GM12878 (cell line): ENCODE measurements at regions of chr7 and their contacts with region 1.

Region 1: GRCh38 chr7:87416682-87417587 is 58.5 kb downstream of the ABCB4 start:
- DNase-seq: peak; percentile 44
- ATAC-seq: peak; percentile 96
- H3K4me3 ChIP-seq: no peak overlapping the region
- H3K27ac ChIP-seq: no peak overlapping the region
- H3K4me1 ChIP-seq: no peaks in the 10 kb centered on the region
- H3K27me3 ChIP-seq: no peaks in the 10 kb centered on the region
- CTCF ChIP-seq: peak; percentile 55 to 82 (median 61)
- EP300 ChIP-seq: no peak
- POLR2A ChIP-seq: no peak
- RAD21 ChIP-seq: peak; percentile 90

Region 2: DNA sequence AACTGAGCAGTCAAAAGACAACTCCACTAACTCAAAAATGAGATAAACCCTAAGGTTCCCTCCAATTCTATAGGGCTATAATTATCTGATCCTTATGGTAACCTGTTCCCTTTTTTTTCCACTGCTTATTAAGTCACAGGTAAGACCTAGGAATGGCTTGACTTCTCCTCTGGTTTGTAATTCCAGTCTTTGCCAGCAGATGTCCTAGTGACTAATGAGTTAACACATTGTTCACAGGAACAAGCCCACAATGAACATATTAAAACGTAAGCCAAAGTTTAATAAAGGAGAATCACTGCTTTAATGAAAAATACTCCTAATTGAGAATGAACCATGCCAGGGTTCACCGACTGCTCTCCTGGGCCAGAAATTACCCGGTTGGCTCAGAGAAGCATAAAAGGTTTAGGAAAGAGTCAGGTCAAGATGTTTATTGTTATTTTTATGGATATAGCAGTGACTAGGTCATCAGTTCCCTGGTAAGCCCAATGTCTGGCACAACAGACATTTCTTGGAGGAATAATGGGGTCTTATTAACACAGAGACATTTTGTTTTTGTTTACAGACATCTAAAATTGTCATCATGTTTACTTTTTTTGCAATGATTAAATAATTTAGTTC is 477.6 kb before region 1 on chr7:
- CTCF ChIA-PET with region 1: no interaction called
- POLR2A ChIA-PET with region 1: no interaction called
- RAD21 ChIA-PET with region 1: no interaction called
- SMC1A ChIA-PET with region 1: no interaction called
- in situ Hi-C with region 1: loop called (anchors 25 kb)
- intact Hi-C with region 1: no loop called
- DNase-seq: peak; percentile 40
- ATAC-seq: peak; percentile 88
- H3K4me3 ChIP-seq: no peak overlapping the region
- H3K27ac ChIP-seq: no peak overlapping the region
- H3K4me1 ChIP-seq: no peaks in the 10 kb centered on the region
- H3K27me3 ChIP-seq: no peaks in the 10 kb centered on the region
- CTCF ChIP-seq: peak; percentile 57 to 71 (median 69); a peak in 5 of 6 replicates
- EP300 ChIP-seq: no peak
- POLR2A ChIP-seq: no peak
- RAD21 ChIP-seq: peak; percentile 88

Region 3: DNA sequence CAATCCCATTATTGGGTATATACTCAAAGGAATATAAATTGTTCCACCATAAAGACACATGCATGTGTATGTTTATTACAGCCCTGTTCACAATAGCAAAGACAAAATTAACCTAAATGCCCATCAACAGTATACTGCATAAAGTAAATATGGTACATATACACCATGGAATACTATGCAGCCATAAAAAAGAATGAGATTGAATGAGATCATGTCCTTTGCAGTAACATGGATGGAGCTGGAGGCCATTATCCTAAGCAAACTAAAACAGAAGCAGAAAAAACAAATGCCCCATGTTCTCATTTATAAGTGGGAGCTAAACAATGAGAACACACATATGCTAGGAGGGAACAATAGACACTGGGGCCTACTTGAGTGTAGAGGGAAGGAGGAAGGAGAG is 116.2 kb before region 1 on chr7:
- CTCF ChIA-PET with region 1: interaction called, 24 read pairs
- POLR2A ChIA-PET with region 1: no interaction called
- RAD21 ChIA-PET with region 1: interaction called, 4 read pairs
- SMC1A ChIA-PET with region 1: no interaction called
- in situ Hi-C with region 1: no loop called
- intact Hi-C with region 1: no loop called
- DNase-seq: no peak
- ATAC-seq: no peak
- H3K4me3 ChIP-seq: no peak overlapping the region
- H3K27ac ChIP-seq: no peak overlapping the region
- H3K4me1 ChIP-seq: no peaks in the 10 kb centered on the region
- H3K27me3 ChIP-seq: no peaks in the 10 kb centered on the region
- CTCF ChIP-seq: no peak
- EP300 ChIP-seq: no peak
- POLR2A ChIP-seq: no peak
- RAD21 ChIP-seq: no peak

Region 4: GRCh38 chr7:87322912-87323424 is 94.0 kb before region 1 on chr7:
- CTCF ChIA-PET with region 1: interaction called, 296 read pairs
- POLR2A ChIA-PET with region 1: interaction called, 8 read pairs
- RAD21 ChIA-PET with region 1: interaction called, 109 read pairs
- SMC1A ChIA-PET with region 1: interaction called, 260 read pairs
- in situ Hi-C with region 1: no loop called
- intact Hi-C with region 1: no loop called
- DNase-seq: no peak
- ATAC-seq: no peak
- H3K4me3 ChIP-seq: no peak overlapping the region
- H3K27ac ChIP-seq: no peak overlapping the region
- H3K4me1 ChIP-seq: no peaks in the 10 kb centered on the region
- H3K27me3 ChIP-seq: no peaks in the 10 kb centered on the region
- CTCF ChIP-seq: no peak
- EP300 ChIP-seq: no peak
- POLR2A ChIP-seq: no peak
- RAD21 ChIP-seq: no peak

Region 5: DNA sequence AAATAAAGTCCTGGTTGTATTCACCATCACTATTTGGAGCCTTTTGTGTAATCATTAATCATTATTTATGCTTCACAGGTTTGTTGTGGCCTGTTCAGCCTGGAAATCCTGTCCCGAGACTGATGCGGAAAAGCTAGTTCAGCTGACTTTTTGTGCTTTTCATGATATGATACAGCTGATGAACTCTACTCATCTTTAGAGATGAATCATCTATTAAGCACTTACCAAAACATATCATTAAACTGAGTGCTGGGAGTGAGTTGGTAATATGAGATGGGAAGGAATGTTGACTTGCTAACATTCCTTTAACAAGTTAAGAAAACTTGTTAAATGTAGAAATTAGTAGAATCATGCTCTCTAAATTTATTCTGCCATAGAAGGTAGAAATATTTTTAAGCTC is 18.5 kb before region 1 on chr7:
- CTCF ChIA-PET with region 1: interaction called, 21 read pairs
- POLR2A ChIA-PET with region 1: no interaction called
- RAD21 ChIA-PET with region 1: interaction called, 5 read pairs
- SMC1A ChIA-PET with region 1: interaction called, 74 read pairs
- in situ Hi-C with region 1: no loop called
- intact Hi-C with region 1: no loop called
- DNase-seq: no peak
- ATAC-seq: no peak
- H3K4me3 ChIP-seq: no peak overlapping the region
- H3K27ac ChIP-seq: no peak overlapping the region
- H3K4me1 ChIP-seq: no peaks in the 10 kb centered on the region
- H3K27me3 ChIP-seq: no peaks in the 10 kb centered on the region
- CTCF ChIP-seq: no peak
- EP300 ChIP-seq: no peak
- POLR2A ChIP-seq: no peak
- RAD21 ChIP-seq: no peak

Region 6: DNA sequence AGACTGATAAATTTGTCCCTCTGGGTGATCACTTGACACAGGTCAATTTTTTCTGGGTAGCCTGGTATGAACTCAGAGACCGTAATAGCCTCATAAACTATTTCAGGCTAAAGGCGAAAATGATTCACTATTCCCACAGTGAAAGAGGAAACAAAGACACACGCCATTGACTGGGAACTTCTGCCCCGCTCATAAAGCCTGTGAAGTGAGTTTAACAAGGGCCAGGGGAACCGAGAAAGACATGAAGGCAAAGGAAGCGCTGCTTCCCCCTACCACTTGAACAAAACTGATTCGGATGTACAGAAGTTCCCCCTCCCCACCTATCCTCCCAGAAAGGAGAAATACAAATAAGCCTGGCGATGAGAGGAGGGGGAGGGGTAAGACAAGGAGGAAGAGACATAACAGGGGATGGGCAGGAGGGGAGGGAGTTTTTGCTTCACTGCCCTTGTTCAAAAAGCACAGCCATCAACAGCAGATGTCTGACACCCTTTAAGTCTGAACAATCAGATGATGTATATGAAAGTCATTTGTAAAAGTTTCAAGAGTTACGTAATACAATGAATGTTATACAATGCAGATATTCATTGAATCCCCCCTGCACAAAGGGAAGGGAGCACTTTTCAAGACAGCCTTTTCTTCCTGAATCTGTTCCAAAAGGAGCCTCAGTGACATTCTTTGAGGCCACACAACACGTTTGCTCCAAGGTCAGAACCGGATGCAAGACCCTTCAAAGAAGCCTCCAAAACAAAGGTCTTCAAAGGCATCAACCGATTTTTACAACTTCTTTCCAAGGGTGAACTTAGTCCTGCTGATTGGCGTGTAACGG is 57.8 kb after region 1 on chr7:
- CTCF ChIA-PET with region 1: interaction called, 5 read pairs
- POLR2A ChIA-PET with region 1: no interaction called
- RAD21 ChIA-PET with region 1: interaction called, 5 read pairs
- SMC1A ChIA-PET with region 1: interaction called, 9 read pairs
- in situ Hi-C with region 1: no loop called
- intact Hi-C with region 1: loop called (anchors 2 kb)
- DNase-seq: peak; percentile 96
- ATAC-seq: peak; percentile 80
- H3K4me3 ChIP-seq: peak overlapping the region; percentile 77
- H3K27ac ChIP-seq: peak overlapping the region; percentile 72
- H3K4me1 ChIP-seq: peaks cover 12% of the 10 kb centered on the region
- H3K27me3 ChIP-seq: no peaks in the 10 kb centered on the region
- CTCF ChIP-seq: no peak
- EP300 ChIP-seq: peak; percentile 87 to 88
- POLR2A ChIP-seq: 0 out of 2 replicates have a peak, but pooled peaks have one; percentile 18
- RAD21 ChIP-seq: 0 out of 2 replicates have a peak, but pooled peaks have one; percentile 1